ENCODE measurements at regions of chr15 and their contacts with region 1.

Region 1: DNA sequence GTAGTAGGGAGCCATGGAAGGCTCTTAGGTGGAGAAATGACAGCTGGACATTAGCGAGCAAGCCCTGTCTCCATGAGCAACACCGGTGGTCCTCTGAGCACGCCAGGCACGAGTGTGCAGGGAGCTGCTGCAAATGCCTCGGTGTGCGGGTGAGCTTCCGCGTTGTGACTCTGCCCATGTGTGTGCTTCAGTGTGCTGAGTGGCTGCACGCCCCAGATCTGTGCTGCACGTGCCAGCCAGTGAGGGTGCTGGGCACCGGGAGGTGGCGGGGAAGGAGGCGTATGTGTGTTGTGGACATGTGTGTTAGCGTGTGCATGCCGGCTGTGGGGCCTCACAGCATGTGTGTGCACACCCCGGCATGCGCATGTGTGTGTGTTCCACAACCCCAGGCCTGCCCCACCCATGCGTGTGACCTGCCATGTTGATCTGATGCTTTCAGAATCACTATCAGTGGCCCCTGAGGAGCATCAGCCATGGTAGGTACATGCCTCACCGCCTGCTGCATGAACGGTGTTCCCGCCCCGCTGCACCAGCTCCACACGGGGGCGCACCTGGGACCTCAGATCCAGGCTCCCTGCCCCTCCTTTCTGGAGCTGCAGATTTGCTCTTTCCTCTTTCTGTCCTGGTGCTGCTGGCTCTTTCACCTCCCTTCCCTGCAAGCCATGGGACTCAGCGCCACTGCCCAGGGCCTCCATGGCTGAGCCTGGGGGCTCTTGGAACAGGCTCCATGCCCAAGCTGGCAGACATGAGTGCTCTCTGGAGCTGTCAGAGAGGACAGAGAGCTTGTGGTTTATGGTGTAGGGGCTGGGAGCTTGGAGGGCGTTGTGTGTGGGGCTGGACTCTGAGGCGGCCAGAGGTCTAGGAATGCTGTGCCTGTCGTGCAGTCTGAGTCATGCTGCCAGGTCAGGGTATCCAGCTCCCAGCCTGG is 169.4 kb downstream of the TBC1D2B start:
- DNase-seq: no peak
- ATAC-seq: peak in 1 of 2 experiments; percentile 52; a peak in 3 of 6 replicates
- H3K4me3 ChIP-seq: no peak overlapping the region
- H3K27ac ChIP-seq: no peak overlapping the region
- H3K4me1 ChIP-seq: peaks cover 4% of the 10 kb centered on the region
- CTCF ChIP-seq: no peak
- EP300 ChIP-seq: no peak
- POLR2A ChIP-seq: no peak
- RAD21 ChIP-seq: no peak

Region 2: DNA sequence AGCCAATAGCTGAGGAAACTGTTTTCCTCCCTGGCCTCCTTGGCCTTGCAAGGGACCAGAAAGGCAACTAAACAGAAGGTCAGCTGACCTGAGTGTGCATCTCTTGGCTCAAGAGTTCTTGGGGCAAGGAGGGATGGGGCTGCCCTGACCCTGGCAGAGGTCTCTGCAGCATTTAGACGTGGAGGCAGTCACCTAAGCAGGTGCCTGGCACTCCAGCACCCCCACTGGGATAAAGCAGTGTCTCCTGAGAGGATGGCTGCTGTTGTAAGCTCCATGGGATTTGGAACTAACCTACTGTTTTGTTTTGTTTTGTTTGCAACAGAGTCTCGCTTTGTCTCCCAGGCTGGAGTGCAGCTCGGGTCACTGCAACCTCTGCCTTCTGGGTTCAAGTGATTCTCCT is 15.8 kb before region 1 on chr15:
- CTCF ChIA-PET with region 1: interaction called, 10 read pairs
- POLR2A ChIA-PET with region 1: no interaction called
- DNase-seq: no peak
- ATAC-seq: no peak
- H3K4me3 ChIP-seq: no peak overlapping the region
- H3K27ac ChIP-seq: no peak overlapping the region
- H3K4me1 ChIP-seq: 0 out of 3 replicates have a peak, but pooled peaks cover 2% of the 10 kb centered on the region
- CTCF ChIP-seq: no peak
- EP300 ChIP-seq: no peak
- POLR2A ChIP-seq: no peak
- RAD21 ChIP-seq: no peak

Region 3: DNA sequence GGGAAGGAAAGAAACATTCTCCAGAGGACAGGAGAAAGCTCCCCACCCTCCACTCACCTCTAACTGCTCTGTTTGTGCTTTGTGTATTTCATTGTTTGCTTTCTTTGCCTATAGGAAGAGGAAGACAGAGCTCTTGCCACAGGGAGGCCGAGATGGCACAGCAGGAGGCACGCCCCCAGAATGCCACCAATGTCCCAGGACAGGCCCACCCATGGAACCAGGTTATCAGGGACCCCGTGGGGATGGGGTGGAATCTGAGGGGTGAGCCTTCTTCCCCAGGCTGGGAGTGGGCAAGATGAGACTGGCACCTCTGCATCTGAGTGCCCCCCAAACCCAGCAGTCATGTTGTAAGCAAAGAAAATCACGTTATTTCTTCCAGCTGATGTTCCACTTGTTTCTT is 13.6 kb after region 1 on chr15:
- CTCF ChIA-PET with region 1: interaction called, 13 read pairs
- POLR2A ChIA-PET with region 1: no interaction called
- DNase-seq: no peak
- ATAC-seq: no peak
- H3K4me3 ChIP-seq: no peak overlapping the region
- H3K27ac ChIP-seq: no peak overlapping the region
- H3K4me1 ChIP-seq: no peaks in the 10 kb centered on the region
- CTCF ChIP-seq: no peak
- EP300 ChIP-seq: no peak
- POLR2A ChIP-seq: no peak
- RAD21 ChIP-seq: no peak

Measured in A549 (cell line).